AG04450 (cell line): ENCODE measurements at regions of chr14 and their contacts with region 1.

Region 1: DNA sequence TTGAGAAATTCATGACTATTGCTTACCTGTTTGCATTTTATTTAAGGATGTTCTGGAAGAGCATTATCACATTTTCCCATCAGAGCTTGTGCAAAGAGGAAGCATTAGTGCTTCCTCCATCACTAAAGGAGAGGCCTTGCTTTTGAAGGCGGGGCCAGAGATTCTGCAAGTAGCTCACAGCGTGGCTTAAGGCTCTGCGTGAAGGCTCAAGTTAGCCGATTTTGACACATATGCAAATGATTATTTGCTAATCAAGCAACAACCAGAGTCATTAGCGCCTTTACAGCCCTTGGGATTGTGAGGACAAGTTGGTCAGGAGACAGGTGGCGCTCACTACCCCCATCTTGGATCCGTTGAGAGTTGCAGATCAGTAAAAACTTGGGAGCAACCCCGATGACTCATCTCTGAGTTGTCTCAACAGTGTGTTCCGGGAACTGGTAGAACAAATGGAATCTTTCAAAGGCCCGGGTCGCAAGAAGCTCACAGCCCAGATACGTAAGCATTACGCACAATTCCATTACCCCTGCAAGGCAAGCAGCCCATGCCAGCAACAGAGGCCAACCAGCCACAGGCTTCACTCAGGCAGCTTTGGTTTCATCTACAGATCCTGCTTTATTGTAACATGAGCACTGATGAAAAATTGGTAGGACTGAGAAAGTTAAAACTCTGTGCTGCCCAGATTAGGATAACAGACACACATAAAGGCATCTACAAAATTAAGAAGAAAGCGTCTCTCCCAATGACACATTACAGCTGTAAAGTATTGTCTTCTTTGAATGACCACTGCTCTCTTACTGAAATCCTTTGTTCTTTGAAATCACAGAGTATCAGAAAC is 34.9 kb upstream of the SPTSSA start:
- DNase-seq: peak; percentile 98
- H3K4me3 ChIP-seq: no peak overlapping the region; the same call in 1 of the 2 replicates
- H3K27ac ChIP-seq: peak overlapping the region; percentile 96
- H3K27me3 ChIP-seq: no peaks in the 10 kb centered on the region
- CTCF ChIP-seq: peak; percentile 40

Region 2: GRCh38 chr14:34461334-34462131 is 35.4 kb before region 1 on chr14:
- CTCF ChIA-PET with region 1: interaction called, 4 read pairs
- POLR2A ChIA-PET with region 1: interaction called, 15 read pairs
- DNase-seq: no peak
- H3K4me3 ChIP-seq: peak overlapping the region; percentile 91
- H3K27ac ChIP-seq: peak overlapping the region; percentile 75
- H3K27me3 ChIP-seq: no peaks in the 10 kb centered on the region
- CTCF ChIP-seq: no peak